Left lung (tissue), 14 donors: ENCODE measurements at regions of chr12 and their contacts with region 1.

Region 1: GRCh38 chr12:131311764-131312163 is 358.1 kb downstream of the ADGRD1 start:
- DNase-seq: no peak
- ATAC-seq: no peak
- H3K4me3 ChIP-seq: no peak overlapping the region
- H3K27ac ChIP-seq: no peak overlapping the region
- H3K4me1 ChIP-seq: no peaks in the 10 kb centered on the region
- H3K27me3 ChIP-seq: peaks cover 0 to 41% of the 10 kb centered on the region in 2 donors
- CTCF ChIP-seq: no peak

Region 2: DNA sequence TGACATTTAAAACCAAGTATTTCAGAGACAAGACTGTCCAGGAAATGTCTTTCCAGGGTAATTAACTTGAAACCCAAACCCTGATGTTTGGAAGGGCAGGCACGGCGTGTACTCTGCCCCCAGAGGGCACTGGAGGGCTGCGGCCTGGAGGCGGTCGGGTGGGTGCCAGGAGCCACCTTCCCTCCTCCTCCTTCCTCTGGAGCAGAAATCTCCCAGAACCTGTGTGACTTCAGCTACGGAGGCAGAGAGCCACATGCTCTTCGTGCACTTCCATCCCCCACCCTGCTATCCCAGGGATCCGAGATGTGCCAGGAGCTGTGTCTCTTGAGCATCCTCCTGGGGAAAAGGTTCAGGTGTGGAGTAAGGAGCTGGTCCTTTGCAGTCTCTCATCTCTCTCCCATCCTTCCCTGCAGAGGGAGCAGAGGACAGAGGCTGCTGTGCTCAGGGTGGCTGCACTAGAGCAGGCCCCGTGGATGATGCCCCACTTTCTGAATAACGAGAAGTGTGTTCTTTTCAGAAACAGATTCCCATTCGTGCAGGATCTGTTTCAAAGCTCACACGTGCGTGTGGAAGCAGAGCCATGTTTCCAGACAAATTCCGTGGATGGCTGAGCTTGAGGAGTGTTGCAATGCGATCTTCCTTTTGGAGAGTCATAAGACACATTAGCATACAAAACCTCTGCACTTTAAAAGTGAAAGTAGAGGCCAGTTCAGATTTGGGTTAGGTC is 195.2 kb before region 1 on chr12:
- intact Hi-C with region 1: no loop called
- DNase-seq: peak in 1 of 4 donors; percentile 19
- ATAC-seq: peak; percentile 13
- H3K4me3 ChIP-seq: no peak overlapping the region
- H3K27ac ChIP-seq: peak overlapping the region in 1 of 2 donors; percentile 30
- H3K4me1 ChIP-seq: peaks cover 0 to 4% of the 10 kb centered on the region in 2 donors
- H3K27me3 ChIP-seq: no peaks in the 10 kb centered on the region
- CTCF ChIP-seq: peak in 1 of 2 donors; percentile 11

Region 3: DNA sequence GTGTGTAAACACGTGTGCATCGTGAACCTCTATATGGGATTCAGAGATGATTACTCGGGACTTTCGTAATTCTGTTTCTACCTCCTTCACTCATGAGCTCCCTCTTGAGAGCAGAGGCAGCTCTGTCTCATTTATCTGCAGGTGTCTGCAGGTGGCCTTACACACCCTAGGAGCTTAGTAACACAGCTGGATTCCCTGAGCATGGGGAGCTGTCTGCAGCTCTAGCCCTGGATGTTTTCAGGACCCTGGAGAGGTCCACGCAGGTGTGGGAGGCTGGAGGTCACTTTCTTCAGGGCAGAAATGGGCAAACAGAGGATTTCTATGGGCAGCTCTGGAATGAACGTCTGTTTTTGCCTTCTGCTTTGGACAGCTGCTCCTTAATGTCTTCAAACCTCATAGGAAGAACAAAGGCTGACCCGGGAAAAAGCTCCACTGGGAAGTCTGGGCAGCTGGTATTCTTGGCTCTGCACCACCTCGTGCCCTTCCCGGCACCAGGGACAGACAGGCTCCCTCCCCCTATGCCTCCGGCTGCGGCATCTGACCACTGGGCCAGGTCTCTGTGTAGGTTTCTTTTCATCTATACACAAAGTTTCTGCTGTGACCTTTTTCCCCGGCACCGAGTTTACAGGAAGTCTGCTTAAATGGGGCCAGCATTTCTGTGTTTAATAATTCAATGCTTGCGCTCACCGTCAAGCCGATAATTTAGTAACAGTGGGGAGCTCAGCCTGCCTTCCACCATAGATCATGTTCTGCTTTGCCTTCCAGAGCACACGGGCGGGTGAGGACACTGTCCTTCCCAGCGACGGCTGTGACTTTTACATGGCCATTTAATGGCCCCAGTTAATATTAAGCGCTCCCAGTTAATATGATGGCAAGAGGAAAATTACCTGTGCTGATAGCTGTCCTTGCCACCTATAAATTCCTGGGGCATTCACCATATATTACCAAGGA is 78.9 kb after region 1 on chr12:
- intact Hi-C with region 1: no loop called
- DNase-seq: peak in 1 of 4 donors; percentile 41
- ATAC-seq: peak; percentile 74
- H3K4me3 ChIP-seq: no peak overlapping the region
- H3K27ac ChIP-seq: no peak overlapping the region
- H3K4me1 ChIP-seq: no peaks in the 10 kb centered on the region
- H3K27me3 ChIP-seq: peaks cover 0 to 52% of the 10 kb centered on the region in 2 donors
- CTCF ChIP-seq: no peak

Region 4: DNA sequence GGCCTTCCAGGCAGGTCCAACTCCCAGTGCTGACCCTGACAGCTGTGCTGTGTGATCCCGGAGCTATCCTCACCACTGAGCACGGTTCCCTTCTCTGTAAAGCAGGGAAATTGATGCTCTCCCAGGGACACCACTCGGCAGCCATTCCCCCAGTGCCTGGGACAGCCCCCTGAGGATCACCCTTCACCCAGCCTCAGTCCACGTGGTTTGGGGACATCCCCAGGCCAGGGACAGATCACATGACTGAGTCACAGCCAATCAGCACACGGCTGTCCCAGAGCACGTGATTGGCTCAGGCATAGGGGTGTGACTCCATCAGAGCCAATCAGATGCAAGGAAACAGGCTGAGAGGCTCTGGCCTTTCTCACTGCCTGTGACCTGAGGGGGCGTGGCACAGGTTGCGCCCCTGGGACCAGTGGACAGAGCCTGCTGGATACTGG is 330.4 kb after region 1 on chr12:
- intact Hi-C with region 1: loop called in 1 of 2 experiments (anchors 5 kb)
- DNase-seq: no peak
- ATAC-seq: no peak
- H3K4me3 ChIP-seq: no peak overlapping the region
- H3K27ac ChIP-seq: no peak overlapping the region
- H3K4me1 ChIP-seq: no peaks in the 10 kb centered on the region
- H3K27me3 ChIP-seq: peaks cover 0 to 72% of the 10 kb centered on the region in 2 donors
- CTCF ChIP-seq: no peak

Region 5: GRCh38 chr12:131793243-131794022 is 481.7 kb after region 1 on chr12:
- intact Hi-C with region 1: no loop called
- DNase-seq: no peak
- ATAC-seq: no peak
- H3K4me3 ChIP-seq: no peak overlapping the region
- H3K27ac ChIP-seq: no peak overlapping the region
- H3K4me1 ChIP-seq: peaks cover 0 to 11% of the 10 kb centered on the region in 2 donors
- H3K27me3 ChIP-seq: no peaks in the 10 kb centered on the region
- CTCF ChIP-seq: no peak